Cardiac septum (tissue), 1 donor: ENCODE measurements at regions of chr2 and their contacts with region 1.

Region 1: GRCh38 chr2:16784652-16785051 is 119.0 kb upstream of the CYRIA start:
- DNase-seq: no peak

Region 2: DNA sequence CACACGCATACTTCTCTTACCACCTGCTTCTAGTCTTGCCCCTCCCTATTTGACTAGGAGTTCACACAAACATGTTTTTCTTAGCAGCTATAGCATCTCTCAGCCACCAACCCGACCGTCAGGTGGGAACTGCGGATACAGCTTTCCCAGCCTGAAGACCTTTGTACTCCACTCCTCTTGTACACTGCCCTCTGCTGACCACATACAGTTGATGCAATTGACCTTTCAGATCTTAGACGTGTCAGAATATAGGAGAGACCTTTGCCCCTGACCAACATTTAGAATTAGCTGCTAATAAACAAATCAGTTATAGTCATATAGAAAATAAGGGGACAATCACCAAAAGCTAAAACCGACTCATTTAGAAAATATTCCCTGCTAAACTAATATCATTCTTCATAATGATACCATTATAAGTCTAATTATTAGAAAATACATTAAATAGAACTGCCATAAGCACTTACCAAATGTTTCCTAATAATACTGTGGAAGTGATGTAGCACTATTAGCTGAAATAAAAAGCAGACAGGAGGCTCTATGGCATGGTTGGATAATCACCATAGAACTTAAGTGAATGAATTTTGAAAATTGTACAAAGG is 525.2 kb after region 1 on chr2:
- intact Hi-C with region 1: loop called (anchors 5 kb)
- DNase-seq: no peak